Activated CD4-positive, alpha-beta T cell treated with anti-CD3 and anti-CD28 coated beads, Interleukin-2, amount 10 ng/mL, durations not matched to agents 24 days and 14 days (primary cell): ENCODE measurements at regions of chr5 and their contacts with region 1.

Region 1: DNA sequence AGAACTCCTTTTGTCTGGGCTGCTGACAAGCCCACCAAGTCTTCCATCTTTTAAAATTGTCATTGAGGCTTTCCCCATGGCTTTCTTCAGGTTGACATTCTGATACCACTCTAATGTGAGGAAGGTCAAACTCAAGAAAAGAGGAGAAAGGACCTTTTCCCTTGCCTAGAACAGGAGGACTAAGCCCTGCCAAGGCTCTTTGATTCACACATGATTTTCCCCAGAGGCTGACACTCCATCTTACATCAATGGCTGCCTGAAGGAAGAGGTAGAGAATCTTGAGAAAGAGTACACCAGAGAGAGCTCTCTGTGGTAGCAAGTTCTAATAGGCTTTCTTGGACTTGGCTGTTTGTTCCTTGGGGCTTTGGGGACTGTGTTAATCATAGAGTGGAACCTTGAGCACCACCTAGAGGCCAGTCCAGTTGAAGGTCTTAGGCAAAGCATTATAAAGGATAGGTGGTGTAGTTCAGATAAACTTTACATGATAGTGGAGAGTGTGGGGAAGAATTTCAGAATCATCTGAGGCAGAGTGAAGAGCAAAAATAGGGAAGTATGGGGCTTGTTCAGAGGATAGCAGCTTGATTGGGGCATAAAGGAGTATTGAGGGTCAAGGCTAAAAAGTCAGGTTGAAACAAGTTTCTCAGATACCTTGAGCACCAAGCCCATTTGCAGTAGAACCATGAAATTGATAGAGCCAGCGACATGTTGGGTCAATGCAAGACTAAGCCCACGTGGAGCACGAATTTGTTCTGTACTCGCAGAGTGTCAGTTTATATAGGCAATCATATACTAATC is 36.7 kb downstream of the NDFIP1 start:
- DNase-seq: peak; percentile 89
- H3K4me3 Mint-ChIP-seq: no peak overlapping the region
- H3K27ac Mint-ChIP-seq: no peak overlapping the region
- H3K4me1 Mint-ChIP-seq: no peaks in the 10 kb centered on the region
- H3K27me3 Mint-ChIP-seq: no peaks in the 10 kb centered on the region

Region 2: GRCh38 chr5:141951332-141951781 is 193.9 kb before region 1 on chr5:
- intact Hi-C with region 1: no loop called
- DNase-seq: peak; percentile 73
- H3K4me3 Mint-ChIP-seq: no peak overlapping the region
- H3K27ac Mint-ChIP-seq: peak overlapping the region; percentile 4
- H3K4me1 Mint-ChIP-seq: peaks cover 20% of the 10 kb centered on the region
- H3K27me3 Mint-ChIP-seq: no peaks in the 10 kb centered on the region

Region 3: GRCh38 chr5:141992349-141992963 is 152.8 kb before region 1 on chr5:
- intact Hi-C with region 1: loop called (anchors 1 kb)
- DNase-seq: peak; percentile 93
- H3K4me3 Mint-ChIP-seq: no peak overlapping the region
- H3K27ac Mint-ChIP-seq: no peak overlapping the region
- H3K4me1 Mint-ChIP-seq: peaks cover 3% of the 10 kb centered on the region
- H3K27me3 Mint-ChIP-seq: no peaks in the 10 kb centered on the region